Posterior vena cava (tissue), 2 donors: ENCODE measurements at regions of chr22 and their contacts with region 1.

Region 1: DNA sequence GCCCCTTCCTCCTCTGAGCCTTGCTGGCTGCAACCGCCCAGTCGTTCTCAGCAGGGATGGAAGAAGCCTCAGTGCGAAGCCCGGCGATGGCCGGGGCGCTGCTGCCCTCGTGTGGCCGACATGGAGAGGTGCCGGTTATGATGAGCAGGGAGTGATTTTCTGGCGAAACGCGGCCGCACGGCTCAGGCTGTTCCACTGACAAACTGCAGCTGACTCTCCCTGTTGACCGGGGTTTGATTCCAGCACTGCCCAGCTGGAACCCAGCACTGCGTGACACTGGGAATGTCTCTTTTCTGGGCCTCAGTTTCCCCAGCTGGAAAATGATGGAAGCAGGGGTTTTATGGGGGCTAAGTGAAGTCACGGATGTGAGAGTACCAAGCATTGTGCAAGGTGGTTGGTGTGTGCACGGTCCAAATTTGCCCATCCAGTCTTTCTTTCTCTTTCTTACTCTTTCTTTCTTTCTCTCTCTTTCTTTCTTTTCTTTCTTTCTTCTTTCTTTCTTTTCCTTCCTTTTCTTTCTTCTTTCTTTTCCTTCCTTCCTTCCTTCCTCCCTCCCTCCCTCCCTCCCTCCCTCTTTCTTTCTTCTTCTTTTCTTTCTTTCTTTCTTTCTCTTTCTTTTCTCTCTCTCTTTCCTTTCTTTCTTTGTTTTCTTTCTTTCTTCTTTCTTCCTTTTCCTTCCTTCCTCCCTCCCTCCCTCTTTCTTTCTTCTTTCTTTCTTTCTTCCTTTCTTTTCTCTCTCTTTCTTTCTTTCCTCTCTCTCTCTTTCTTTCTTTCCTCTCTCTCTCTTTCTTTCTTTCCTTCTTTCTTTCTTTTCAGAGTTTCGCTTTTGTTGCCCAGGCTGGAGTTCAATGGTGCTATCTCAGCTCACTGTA is 25.8 kb upstream of the MPPED1 start:
- DNase-seq: peak; percentile 94

Region 2: DNA sequence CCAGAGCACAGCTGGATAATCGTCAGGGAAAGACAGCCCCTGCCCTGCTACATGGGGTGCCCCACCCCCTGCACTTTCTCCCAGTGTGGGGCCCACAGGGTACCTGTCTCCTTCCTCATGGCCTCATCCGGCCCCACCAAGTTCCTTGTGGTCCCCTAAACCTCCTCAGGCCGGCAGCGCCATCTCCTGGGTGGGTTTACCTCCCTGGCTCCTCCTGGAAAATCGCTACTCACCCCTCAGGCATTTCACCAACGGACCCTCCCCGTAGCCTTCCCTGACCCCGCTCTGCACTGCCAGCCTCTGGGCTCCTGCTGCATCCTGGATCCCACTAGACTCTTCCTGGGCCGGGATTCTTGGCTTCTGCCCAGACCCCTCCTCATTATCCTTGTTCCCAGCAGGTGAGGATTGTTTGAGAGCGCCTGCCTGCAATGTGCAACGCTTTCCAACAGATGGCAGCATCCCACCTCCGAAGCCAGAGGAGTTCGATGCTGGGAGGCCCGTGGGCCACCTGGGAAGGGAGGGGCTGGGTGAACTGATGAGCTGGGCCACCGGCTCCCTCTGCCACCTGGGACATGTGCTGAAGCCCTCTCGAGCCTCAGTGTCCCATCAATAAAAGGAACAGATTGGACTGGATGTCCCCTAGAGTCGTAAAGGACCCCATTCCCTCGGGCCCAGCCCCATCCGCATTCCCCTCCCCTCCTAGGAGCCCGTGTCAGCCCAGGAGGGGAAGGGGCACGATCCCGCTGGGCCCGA is 154.9 kb before region 1 on chr22:
- intact Hi-C with region 1: loop called in 1 of 2 experiments (anchors 10 kb)
- DNase-seq: no peak

Region 3: DNA sequence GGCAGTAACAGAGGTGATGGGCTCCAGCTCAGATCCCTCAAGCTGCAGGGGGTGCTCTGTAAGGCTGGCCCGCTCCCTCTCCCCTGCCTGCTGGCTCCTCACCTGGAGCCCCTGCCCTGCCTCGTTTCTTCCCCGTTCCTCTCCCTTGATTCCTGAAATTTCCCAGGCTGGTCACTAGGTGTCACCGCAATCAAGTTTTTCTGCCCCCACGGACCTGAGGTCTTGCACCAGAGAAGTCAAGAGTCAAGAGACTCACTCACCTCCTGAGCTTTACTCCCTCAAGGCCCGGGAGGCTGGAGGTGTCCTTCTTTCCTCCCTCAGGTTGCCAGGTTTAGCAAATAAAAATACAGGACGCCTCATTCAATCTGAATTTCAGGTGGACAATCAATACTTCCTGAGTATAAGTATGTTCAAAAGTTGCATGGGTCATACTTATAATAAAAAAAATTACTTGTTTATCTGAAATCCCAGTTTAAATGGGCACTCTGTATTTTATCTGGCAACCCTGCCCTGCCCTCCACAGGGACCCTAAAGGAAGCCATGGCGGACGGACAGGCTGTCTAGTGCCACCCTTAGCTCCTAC is 112.0 kb before region 1 on chr22:
- intact Hi-C with region 1: loop called (anchors 2 to 5 kb)
- DNase-seq: no peak

Region 4: GRCh38 chr22:43356881-43357280 is 29.1 kb before region 1 on chr22:
- intact Hi-C with region 1: loop called in 1 of 2 experiments (anchors 1 kb)
- DNase-seq: peak; percentile 69

Region 5: DNA sequence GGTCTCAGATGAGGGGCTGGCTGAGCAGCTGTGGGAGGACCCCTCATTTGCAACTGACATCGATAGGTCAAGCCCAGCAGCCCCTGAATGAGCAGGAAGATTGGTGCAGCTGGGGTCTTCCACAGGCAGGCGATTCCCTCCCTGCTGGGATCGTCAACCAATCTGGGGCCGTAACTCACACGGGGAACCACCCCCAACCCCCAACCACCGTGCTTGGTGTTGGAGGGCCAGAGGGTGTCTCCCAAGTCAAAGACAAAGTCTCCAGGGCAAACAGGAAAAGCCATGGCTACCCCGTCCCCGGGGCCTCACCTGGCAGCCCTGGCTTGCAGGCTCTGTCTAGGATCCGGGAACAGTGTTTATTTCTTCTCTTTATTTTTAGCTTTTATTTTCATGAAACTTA is 16.0 kb before region 1 on chr22:
- intact Hi-C with region 1: no loop called
- DNase-seq: peak; percentile 80

Region 6: DNA sequence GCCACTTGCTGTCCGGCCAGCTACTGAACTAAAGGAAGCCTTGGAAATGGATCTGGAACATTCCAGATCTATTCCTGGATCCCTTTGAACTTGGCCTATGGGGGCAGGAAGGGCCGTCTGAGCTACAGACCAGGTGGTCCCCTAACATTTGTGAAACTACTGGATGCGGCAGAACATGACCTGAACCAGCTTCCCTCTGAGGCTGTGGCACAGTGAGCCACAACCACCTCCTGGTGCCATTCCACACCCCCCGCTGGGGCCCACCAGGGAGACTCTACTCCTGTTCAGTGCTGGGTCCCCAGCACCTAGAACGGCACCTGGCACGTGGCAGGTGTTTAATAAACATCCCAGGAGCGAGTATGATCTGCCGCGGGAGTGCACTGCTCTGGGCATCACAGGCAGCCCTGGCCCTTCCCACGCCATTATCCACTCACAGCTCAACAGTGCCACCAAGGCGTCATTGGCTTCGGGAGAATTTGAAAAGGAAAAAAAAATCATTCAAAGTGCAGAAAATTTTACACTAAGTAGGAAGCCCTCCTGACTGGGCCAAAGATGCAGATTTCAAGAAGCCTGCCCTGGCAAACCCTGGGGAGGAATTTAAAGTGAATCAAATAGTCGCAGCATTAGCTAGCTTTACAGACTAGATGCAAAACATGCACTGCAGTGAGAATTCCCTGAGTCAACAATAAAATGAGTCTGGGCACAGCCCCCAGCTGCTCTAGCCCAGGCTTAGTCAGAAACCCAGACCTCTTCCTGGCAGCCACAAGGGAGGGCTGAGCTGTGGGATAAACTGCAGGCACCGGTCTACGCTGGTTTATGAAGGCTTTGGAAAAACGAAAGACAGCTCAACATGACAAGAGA is 440.4 kb after region 1 on chr22:
- intact Hi-C with region 1: loop called in 1 of 2 experiments (anchors 5 kb)
- DNase-seq: no peak

Region 7: DNA sequence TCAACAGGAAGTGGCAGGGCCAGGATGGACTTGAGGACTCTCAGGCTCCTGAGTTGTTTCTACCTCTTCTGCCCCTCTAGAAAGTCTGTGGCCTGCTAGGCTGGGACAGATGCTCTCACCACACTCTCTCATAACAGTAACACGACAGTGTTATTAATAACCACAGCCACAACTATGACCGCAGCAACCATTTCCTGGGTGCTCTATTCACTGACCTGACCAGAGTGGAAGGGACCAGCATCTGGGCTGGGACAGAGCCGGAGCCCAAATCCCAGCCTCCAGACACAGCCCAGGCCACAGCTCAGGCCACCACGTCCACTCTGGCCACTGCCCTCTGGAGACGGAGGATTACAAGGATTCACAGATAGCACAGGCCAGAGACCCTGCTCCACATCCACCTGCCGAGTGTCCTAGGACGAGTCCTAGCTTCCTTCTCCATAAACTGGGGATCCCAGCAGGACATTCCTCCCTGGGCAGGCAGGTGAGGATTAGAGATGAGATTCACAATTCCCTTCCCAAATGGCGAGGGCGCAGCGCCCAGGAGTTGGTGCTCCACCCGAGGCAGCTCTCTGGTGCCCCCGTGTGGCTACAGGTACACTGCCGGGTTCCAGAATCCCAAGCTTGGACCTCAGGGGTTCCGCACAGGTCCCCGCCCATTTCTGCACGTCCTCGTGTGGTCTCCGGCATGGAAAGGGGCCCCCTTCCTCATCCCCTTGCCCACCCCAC is 498.8 kb after region 1 on chr22:
- intact Hi-C with region 1: loop called in 1 of 2 experiments (anchors 5 kb)
- DNase-seq: peak; percentile 85